ENCODE measurements at regions of chr1 and their contacts with region 1.

Region 1: GRCh38 chr1:19704247-19705113 is 39.8 kb downstream of the HTR6 start:
- DNase-seq: peak; percentile 28 to 50
- ATAC-seq: peak; percentile 60 to 88
- H3K4me3 ChIP-seq: no peak overlapping the region
- H3K27ac ChIP-seq: no peak overlapping the region
- H3K4me1 ChIP-seq: no peaks in the 10 kb centered on the region
- H3K27me3 ChIP-seq: no peaks in the 10 kb centered on the region
- CTCF ChIP-seq: peak; percentile 70 to 91 (median 85)
- POLR2A ChIP-seq: no peak

Region 2: DNA sequence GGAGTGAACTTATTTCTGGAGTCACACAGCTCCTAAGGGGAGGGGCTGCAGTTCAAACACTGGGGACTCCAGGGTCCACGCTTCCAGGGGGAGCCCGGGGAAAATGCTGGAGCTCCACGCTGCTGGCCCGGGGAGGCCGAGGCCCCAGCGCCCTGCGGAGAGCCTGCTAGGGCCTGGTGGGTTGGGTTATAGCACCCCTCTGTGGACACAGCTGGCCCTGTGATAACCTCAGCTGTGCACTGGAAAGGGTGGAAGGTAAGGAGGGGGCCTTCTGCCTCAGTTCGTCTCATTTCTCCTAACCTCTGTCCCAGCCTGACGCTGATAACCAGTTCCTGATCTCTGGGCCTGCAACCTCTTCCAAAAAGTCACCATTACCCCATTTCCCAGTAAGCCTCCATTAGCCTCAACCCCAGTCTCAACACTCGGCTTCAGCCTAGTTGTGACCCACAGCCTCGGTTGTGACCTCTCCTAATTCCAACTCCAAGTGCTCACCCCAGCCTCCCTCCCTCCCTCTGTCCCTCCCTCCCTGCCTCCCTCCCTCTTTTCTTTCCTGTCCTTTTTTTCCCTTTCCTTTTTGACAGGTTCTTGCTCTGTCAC is 53.2 kb before region 1 on chr1:
- in situ Hi-C with region 1: no loop called
- intact Hi-C with region 1: no loop called
- DNase-seq: peak in 1 of 2 donors; percentile 45
- ATAC-seq: peak; percentile 53 to 67
- H3K4me3 ChIP-seq: peak overlapping the region in 1 of 4 donors; percentile 2
- H3K27ac ChIP-seq: peak overlapping the region; percentile 61 to 79 (median 74)
- H3K4me1 ChIP-seq: peaks cover 5 to 26% of the 10 kb centered on the region in 2 donors
- H3K27me3 ChIP-seq: no peaks in the 10 kb centered on the region
- CTCF ChIP-seq: peak; percentile 64 to 80 (median 71)
- POLR2A ChIP-seq: no peak

Region 3: GRCh38 chr1:19661721-19662228 is 42.7 kb before region 1 on chr1:
- in situ Hi-C with region 1: no loop called
- intact Hi-C with region 1: loop called (anchors 1 kb)
- DNase-seq: no peak
- ATAC-seq: no peak
- H3K4me3 ChIP-seq: no peak overlapping the region
- H3K27ac ChIP-seq: no peak overlapping the region
- H3K4me1 ChIP-seq: peaks cover 0 to 3% of the 10 kb centered on the region in 2 donors
- H3K27me3 ChIP-seq: peaks cover 24 to 31% (median 29%) of the 10 kb centered on the region in 3 donors
- CTCF ChIP-seq: peak; percentile 39 to 76 (median 43)
- POLR2A ChIP-seq: no peak

Measured in gastrocnemius medialis (tissue), 4 donors.